Adrenal gland (tissue), 19 donors: ENCODE measurements at regions of chr14 and their contacts with region 1.

Region 1: DNA sequence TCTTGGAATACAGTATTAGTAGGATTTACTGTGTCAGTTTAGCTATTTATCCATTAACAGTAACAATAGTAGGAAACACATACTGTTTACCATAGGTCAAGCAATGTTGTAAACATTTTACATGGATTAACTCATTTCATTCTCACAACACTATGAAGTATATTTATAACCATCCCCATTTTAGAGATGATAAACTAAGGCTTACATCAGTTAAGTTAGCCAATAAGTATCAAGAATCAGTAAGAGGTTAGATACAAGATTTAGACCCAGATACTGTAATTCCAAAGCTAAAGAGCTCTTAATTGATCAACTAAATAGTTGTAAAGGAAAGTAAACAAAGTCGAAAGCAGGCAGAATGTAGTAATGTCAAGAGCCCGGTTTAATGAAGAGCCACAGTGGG is 1.1 kb downstream of the SYNJ2BP start:
- DNase-seq: no peak
- H3K4me3 ChIP-seq: peak overlapping the region in 1 of 4 donors; percentile 90
- H3K27ac ChIP-seq: no peak overlapping the region
- H3K4me1 ChIP-seq: peaks cover 7 to 27% of the 10 kb centered on the region in 2 donors
- H3K27me3 ChIP-seq: no peaks in the 10 kb centered on the region
- CTCF ChIP-seq: no peak
- POLR2A ChIP-seq: no peak

Region 2: DNA sequence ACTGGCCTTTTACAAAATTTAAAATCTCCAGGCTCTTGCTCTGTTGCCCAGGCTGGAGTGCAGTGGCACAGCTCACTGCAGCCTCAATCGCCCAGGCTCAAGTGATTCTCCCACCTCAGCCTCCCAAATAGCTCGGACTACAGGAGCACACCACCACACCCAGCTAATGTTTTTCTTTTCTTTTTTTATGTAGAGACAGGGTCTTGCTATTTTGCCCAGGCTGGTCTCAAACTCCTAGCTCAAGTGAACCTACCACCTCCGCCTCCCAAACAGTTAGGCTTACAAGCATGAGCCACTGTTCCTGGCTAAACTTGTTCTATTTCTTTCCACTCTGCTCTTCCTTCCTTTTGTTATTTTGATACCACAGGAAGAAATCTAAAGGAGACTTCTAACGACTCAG is 14.1 kb before region 1 on chr14:
- intact Hi-C with region 1: loop called in 1 of 2 experiments (anchors 2 kb)
- DNase-seq: no peak
- H3K4me3 ChIP-seq: no peak overlapping the region
- H3K27ac ChIP-seq: no peak overlapping the region
- H3K4me1 ChIP-seq: peaks cover 0 to 10% of the 10 kb centered on the region in 2 donors
- H3K27me3 ChIP-seq: no peaks in the 10 kb centered on the region
- CTCF ChIP-seq: no peak
- POLR2A ChIP-seq: no peak